ENCODE measurements at regions of chr17 and their contacts with region 1.

Region 1: DNA sequence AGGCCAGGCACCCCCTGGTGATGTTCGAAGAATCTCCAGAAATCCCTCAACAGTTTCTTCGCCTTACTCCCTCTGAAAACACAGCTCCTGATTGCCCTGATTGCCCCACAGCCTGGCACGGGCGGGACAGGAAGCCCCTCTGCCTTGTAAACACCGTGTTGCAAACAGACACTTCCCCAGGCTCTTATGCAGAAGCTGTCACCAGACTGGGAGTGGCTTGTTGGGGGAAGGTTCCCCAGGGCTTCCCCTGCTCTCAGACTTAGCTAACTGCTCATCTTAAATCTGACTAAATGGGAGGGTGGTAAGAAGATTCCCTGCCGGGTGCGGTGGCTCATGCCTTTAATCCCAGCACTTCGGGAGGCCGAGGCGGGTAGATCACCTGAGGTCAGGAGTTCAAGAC is 11.2 kb downstream of the PIK3R5 start:
- DNase-seq: peak; percentile 52 to 93 (median 83)
- ATAC-seq: peak; percentile 95
- H3K4me3 ChIP-seq: peak overlapping the region; percentile 33
- H3K4me3 Mint-ChIP-seq: peak overlapping the region; percentile 76 to 94 (median 86)
- H3K27ac ChIP-seq: peak overlapping the region; percentile 70
- H3K27ac Mint-ChIP-seq: peak overlapping the region; percentile 84 to 98 (median 96)
- H3K4me1 ChIP-seq: peaks cover 81 to 99% of the 10 kb centered on the region in 2 donors
- H3K4me1 Mint-ChIP-seq: peaks cover 78 to 100% (median 98%) of the 10 kb centered on the region in 7 donors
- H3K27me3 ChIP-seq: no peaks in the 10 kb centered on the region
- H3K27me3 Mint-ChIP-seq: no peaks in the 10 kb centered on the region

Region 2: GRCh38 chr17:8941520-8941919 is 12.8 kb before region 1 on chr17:
- CTCF ChIA-PET with region 1: interaction called, 9 read pairs
- POLR2A ChIA-PET with region 1: interaction called, 126 read pairs
- intact Hi-C with region 1: loop called (anchors 1 kb)
- DNase-seq: peak in 8 of 9 donors; percentile 54 to 82 (median 76)
- ATAC-seq: peak; percentile 73
- H3K4me3 ChIP-seq: peak overlapping the region; percentile 46
- H3K4me3 Mint-ChIP-seq: peak overlapping the region; percentile 62 to 86 (median 78)
- H3K27ac ChIP-seq: peak overlapping the region; percentile 65
- H3K27ac Mint-ChIP-seq: peak overlapping the region; percentile 88 to 98 (median 97)
- H3K4me1 ChIP-seq: peaks cover 52 to 73% of the 10 kb centered on the region in 2 donors
- H3K4me1 Mint-ChIP-seq: peaks cover 50 to 96% (median 84%) of the 10 kb centered on the region in 7 donors
- H3K27me3 ChIP-seq: no peaks in the 10 kb centered on the region
- H3K27me3 Mint-ChIP-seq: no peaks in the 10 kb centered on the region

Region 3: GRCh38 chr17:8976638-8977037 is 22.3 kb after region 1 on chr17:
- CTCF ChIA-PET with region 1: no interaction called
- POLR2A ChIA-PET with region 1: no interaction called
- intact Hi-C with region 1: no loop called
- DNase-seq: no peak
- ATAC-seq: no peak
- H3K4me3 ChIP-seq: no peak overlapping the region
- H3K4me3 Mint-ChIP-seq: no peak overlapping the region
- H3K27ac ChIP-seq: no peak overlapping the region
- H3K27ac Mint-ChIP-seq: no peak overlapping the region
- H3K4me1 ChIP-seq: no peaks in the 10 kb centered on the region
- H3K4me1 Mint-ChIP-seq: peaks cover 0 to 3% (median 0%) of the 10 kb centered on the region in 7 donors
- H3K27me3 ChIP-seq: no peaks in the 10 kb centered on the region
- H3K27me3 Mint-ChIP-seq: peaks cover 0 to 4% (median 0%) of the 10 kb centered on the region in 5 donors

Region 4: GRCh38 chr17:9183306-9183705 is 229.0 kb after region 1 on chr17:
- CTCF ChIA-PET with region 1: no interaction called
- POLR2A ChIA-PET with region 1: no interaction called
- intact Hi-C with region 1: no loop called
- DNase-seq: no peak
- ATAC-seq: no peak
- H3K4me3 ChIP-seq: no peak overlapping the region
- H3K4me3 Mint-ChIP-seq: peak overlapping the region in 1 of 10 donors; percentile 14
- H3K27ac ChIP-seq: no peak overlapping the region
- H3K27ac Mint-ChIP-seq: no peak overlapping the region
- H3K4me1 ChIP-seq: peaks cover 0 to 9% of the 10 kb centered on the region in 2 donors
- H3K4me1 Mint-ChIP-seq: no peaks in the 10 kb centered on the region
- H3K27me3 ChIP-seq: no peaks in the 10 kb centered on the region
- H3K27me3 Mint-ChIP-seq: peaks cover 5 to 9% (median 8%) of the 10 kb centered on the region in 5 donors

Measured in naive thymus-derived CD4-positive, alpha-beta T cell (primary cell).